Endothelial cell of umbilical vein (primary cell): ENCODE measurements at regions of chr9 and their contacts with region 1.

Region 1: GRCh38 chr9:97615439-97616072 is 17.6 kb downstream of the TSTD2 start:
- DNase-seq: peak; percentile 77
- H3K4me3 ChIP-seq: no peak overlapping the region
- H3K27ac ChIP-seq: no peak overlapping the region
- H3K4me1 ChIP-seq: no peaks in the 10 kb centered on the region
- H3K27me3 ChIP-seq: no peaks in the 10 kb centered on the region
- CTCF ChIP-seq: peak; percentile 62 to 68
- POLR2A ChIP-seq: no peak

Region 2: GRCh38 chr9:97386733-97387503 is 228.6 kb before region 1 on chr9:
- CTCF ChIA-PET with region 1: interaction called, 59 read pairs
- POLR2A ChIA-PET with region 1: no interaction called
- dilution Hi-C with region 1: no loop called
- intact Hi-C with region 1: loop called (anchors 1 kb)
- DNase-seq: peak; percentile 63
- H3K4me3 ChIP-seq: no peak overlapping the region
- H3K27ac ChIP-seq: no peak overlapping the region
- H3K4me1 ChIP-seq: no peaks in the 10 kb centered on the region
- H3K27me3 ChIP-seq: no peaks in the 10 kb centered on the region
- CTCF ChIP-seq: peak; percentile 97 to 98
- POLR2A ChIP-seq: no peak

Region 3: GRCh38 chr9:97411789-97412625 is 203.5 kb before region 1 on chr9 and contains the start of gene TDRD7:
- CTCF ChIA-PET with region 1: interaction called, 138 read pairs
- POLR2A ChIA-PET with region 1: no interaction called
- dilution Hi-C with region 1: no loop called
- intact Hi-C with region 1: loop called (anchors 1 kb)
- DNase-seq: peak; percentile 82
- H3K4me3 ChIP-seq: peak within 1 kb of the TSS; percentile 73 to 92 (median 90)
- H3K27ac ChIP-seq: peak within 1 kb of the TSS; percentile 11
- H3K4me1 ChIP-seq: peaks cover 8% of the 10 kb centered on the region
- H3K27me3 ChIP-seq: peaks cover 23 to 29% of the 10 kb centered on the region in 2 experiments
- CTCF ChIP-seq: peak; percentile 99
- POLR2A ChIP-seq: no peak
- total RNA-seq, gene TDRD7: 11.2 and 11.5 TPM in 2 replicates

Region 4: DNA sequence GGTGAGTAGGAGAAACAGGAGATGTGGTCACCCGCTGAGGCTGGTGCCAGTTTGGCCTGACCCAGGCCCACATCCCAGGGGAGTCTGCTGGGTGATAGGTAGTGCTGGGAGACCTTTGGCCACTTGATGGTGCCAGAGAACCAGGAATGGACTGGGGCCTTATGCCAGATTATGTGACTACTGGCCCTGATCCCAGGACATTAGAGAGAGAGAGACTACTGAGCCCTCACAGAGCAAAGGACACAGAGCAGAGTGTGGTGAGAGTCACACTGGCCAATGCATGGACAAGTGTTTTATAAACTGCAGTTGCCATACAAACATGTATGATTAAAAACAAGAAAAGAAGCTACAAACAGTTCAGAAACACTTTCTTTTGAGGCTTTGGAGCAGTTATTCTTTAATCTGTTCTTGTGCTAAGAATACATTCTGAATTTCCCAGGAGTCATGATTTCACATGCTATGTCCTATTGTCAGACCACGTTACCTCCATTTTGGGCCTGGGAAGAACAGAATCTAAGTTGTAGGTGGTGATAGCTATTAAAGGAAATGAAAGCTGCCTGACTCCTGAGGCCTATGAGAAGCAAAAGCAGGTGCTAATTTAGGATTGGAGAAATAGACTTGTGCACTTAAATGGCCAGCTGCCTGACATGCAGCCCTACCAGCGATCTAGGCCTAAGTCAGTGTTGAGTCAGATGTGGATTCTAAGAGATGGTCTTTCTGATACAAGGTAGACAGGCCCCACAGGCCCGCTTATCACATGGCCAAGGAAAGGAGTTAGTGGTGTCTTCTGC is 146.7 kb before region 1 on chr9:
- CTCF ChIA-PET with region 1: interaction called, 537 read pairs
- POLR2A ChIA-PET with region 1: no interaction called
- dilution Hi-C with region 1: loop called (anchors 25 kb)
- intact Hi-C with region 1: loop called (anchors 1 kb)
- DNase-seq: peak; percentile 77
- H3K4me3 ChIP-seq: no peak overlapping the region
- H3K27ac ChIP-seq: no peak overlapping the region
- H3K4me1 ChIP-seq: no peaks in the 10 kb centered on the region
- H3K27me3 ChIP-seq: no peaks in the 10 kb centered on the region
- CTCF ChIP-seq: peak; percentile 79 to 81
- POLR2A ChIP-seq: no peak

Region 5: GRCh38 chr9:97564291-97565175 is 51.0 kb before region 1 on chr9:
- CTCF ChIA-PET with region 1: interaction called, 12 read pairs
- POLR2A ChIA-PET with region 1: no interaction called
- dilution Hi-C with region 1: no loop called
- intact Hi-C with region 1: no loop called
- DNase-seq: peak; percentile 89
- H3K4me3 ChIP-seq: no peak overlapping the region
- H3K27ac ChIP-seq: no peak overlapping the region
- H3K4me1 ChIP-seq: peaks cover 16% of the 10 kb centered on the region
- H3K27me3 ChIP-seq: peaks cover 6 to 22% of the 10 kb centered on the region in 2 experiments
- CTCF ChIP-seq: no peak
- POLR2A ChIP-seq: no peak

Region 6: GRCh38 chr9:97675655-97676054 is 60.1 kb after region 1 on chr9:
- CTCF ChIA-PET with region 1: no interaction called
- POLR2A ChIA-PET with region 1: no interaction called
- dilution Hi-C with region 1: no loop called
- intact Hi-C with region 1: no loop called
- DNase-seq: no peak
- H3K4me3 ChIP-seq: no peak overlapping the region
- H3K27ac ChIP-seq: no peak overlapping the region
- H3K4me1 ChIP-seq: no peaks in the 10 kb centered on the region
- H3K27me3 ChIP-seq: no peaks in the 10 kb centered on the region
- CTCF ChIP-seq: no peak
- POLR2A ChIP-seq: no peak

Region 7: DNA sequence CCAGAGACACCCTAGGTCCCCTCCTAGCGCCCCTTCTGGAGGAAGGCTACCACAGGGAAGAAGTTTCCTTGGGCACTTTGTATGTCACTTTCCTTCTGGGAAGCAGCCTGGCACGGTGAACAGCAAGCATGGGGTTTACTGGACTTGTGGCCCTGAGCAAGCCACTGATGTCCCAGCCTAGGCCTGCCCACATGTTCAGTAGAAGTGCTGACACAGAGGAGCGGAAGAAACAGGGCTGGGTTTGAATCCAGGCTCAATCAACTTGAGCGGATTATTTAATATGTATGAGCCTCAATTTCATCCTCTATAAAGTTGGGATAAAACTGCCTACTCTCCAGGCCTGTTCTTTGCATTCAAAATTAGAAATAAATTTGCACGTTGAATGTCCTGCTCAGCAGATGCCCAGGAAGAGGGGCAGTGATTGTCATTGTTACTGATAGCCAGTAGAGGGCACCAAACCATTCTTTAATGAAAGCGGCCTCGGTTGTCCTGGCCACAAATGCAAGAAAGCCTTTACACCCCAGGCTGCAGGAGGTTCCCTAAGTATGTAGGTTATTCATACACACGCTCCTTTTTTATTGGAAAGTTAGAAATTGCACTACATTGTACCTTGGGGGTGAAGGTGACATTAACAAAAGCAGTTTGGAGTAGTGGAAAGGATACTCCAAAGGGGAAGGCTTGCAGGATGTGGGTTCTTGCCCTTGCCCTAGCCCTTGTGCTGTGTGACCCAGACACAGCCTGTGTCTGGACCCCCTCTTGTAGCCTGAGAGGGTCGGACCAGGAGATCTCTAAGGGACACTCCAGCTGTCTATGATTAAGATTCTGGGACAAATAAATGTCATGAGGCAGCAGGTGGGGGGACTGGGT is 95.0 kb after region 1 on chr9:
- CTCF ChIA-PET with region 1: no interaction called
- POLR2A ChIA-PET with region 1: no interaction called
- dilution Hi-C with region 1: no loop called
- intact Hi-C with region 1: no loop called
- DNase-seq: peak; percentile 69
- H3K4me3 ChIP-seq: no peak overlapping the region
- H3K27ac ChIP-seq: no peak overlapping the region
- H3K4me1 ChIP-seq: no peaks in the 10 kb centered on the region
- H3K27me3 ChIP-seq: peaks cover 14 to 17% of the 10 kb centered on the region in 2 experiments
- CTCF ChIP-seq: peak; percentile 73 to 76
- POLR2A ChIP-seq: no peak

Region 8: DNA sequence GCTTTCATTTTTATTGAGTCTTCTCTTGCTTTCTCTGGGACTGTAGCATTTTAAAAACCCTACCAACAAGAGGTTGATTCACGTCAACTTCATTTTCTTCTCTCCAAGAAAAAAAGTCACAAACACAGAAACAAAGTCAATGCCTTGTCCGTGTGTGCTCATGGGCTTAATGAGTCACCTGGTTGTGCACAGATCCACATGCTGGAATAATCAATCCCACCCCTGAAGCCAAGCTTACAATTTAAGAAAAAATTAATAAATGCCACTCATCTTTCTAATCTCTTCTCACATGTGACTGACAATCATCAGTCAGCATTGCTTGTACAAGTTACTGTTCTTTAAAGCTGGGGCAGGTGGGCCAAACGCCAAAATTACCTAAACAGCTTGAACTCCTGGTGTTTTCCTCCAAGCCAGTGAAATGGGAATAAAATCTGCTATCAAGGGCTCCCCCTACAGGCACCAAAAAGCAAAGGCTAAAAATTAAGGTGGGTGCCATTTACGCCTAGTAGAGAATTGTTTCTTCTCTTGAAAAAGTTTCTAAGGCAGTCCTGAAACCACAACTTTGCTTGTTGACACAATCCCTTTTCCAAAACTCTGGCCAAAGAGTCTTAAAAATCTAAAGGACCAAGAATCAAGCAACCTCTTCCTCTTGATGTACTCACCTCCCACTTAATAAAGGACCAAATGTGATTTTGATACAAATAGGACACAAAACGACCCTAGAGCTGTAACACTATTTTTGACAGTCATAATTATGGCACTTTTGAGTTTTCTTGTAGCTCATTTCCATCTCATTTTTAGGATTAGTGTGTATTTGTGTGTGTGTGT is 285.4 kb after region 1 on chr9:
- CTCF ChIA-PET with region 1: interaction called, 14 read pairs
- POLR2A ChIA-PET with region 1: no interaction called
- dilution Hi-C with region 1: no loop called
- intact Hi-C with region 1: no loop called
- DNase-seq: peak; percentile 45
- H3K4me3 ChIP-seq: no peak overlapping the region
- H3K27ac ChIP-seq: no peak overlapping the region
- H3K4me1 ChIP-seq: peaks cover under 1% of the 10 kb centered on the region
- H3K27me3 ChIP-seq: no peaks in the 10 kb centered on the region
- CTCF ChIP-seq: peak; percentile 61 to 69
- POLR2A ChIP-seq: no peak